ENCODE measurements at regions of chr6 and their contacts with region 1.

Region 1: DNA sequence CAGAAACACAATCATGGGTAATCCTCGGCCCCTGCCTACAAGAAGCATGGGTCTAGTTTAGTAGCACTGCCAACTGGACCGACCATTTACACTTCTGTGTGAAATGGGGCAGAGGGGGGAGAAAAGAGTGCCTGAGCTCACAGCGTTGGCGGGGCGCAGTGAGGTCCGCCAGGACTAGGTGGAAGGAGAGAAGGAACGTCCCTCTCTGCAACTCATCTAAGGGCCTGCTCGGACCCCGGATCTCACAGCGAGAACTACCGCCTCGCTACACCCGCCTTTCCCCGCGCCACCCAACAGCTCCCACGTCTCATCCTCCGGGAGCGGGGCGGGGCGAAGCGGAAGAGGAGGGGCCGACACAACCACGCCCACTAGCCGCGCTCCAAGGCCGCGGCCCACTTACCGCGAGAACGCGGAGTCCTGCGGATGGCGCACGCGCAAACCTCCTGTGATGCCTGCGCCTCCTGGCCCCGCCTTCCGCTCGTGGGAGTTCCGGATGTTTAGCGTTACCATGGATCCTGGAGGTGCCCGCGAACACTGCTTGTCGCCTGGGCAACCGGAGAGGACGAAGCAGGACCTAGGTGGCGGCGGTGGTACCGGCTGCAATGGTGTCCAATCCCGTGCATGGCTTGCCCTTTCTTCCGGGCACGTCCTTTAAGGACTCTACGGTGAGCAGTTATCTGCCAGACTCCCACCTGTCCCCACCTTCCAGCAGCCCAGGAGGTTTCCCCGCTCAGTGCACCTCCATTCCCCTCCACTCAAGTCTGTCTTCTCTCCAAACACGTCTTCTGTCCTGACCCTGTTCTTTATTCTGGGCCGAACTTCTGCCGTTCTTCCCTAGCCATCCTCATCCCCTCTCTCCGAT is at the start of gene EFHC1:
- DNase-seq: peak; percentile 98 to 100 (median 99)
- H3K4me3 ChIP-seq: peak within 1 kb of the TSS; percentile 68
- H3K27ac ChIP-seq: peak within 1 kb of the TSS; percentile 40 to 72
- H3K4me1 ChIP-seq: peaks cover 5% of the 10 kb centered on the region
- H3K27me3 ChIP-seq: no peaks in the 10 kb centered on the region
- CTCF ChIP-seq: no peak
- EP300 ChIP-seq: no peak
- POLR2A ChIP-seq: peak; percentile 79
- total RNA-seq, gene EFHC1: 17.6 to 59.5 (median 23.5) TPM

Region 2: GRCh38 chr6:52304983-52305390 is 115.1 kb before region 1 on chr6:
- intact Hi-C with region 1: no loop called
- DNase-seq: no peak
- H3K4me3 ChIP-seq: no peak overlapping the region
- H3K27ac ChIP-seq: no peak overlapping the region
- H3K4me1 ChIP-seq: peaks cover 3% of the 10 kb centered on the region
- H3K27me3 ChIP-seq: no peaks in the 10 kb centered on the region
- CTCF ChIP-seq: no peak
- EP300 ChIP-seq: no peak
- POLR2A ChIP-seq: no peak

Region 3: GRCh38 chr6:52503848-52504781 is 84.1 kb after region 1 on chr6:
- intact Hi-C with region 1: loop called in 1 of 4 experiments (anchors 10 kb)
- DNase-seq: peak in 3 of 5 donors; percentile 42 to 59 (median 55)
- H3K4me3 ChIP-seq: no peak overlapping the region
- H3K27ac ChIP-seq: no peak overlapping the region
- H3K4me1 ChIP-seq: peaks cover 4% of the 10 kb centered on the region
- H3K27me3 ChIP-seq: no peaks in the 10 kb centered on the region
- CTCF ChIP-seq: no peak
- EP300 ChIP-seq: no peak
- POLR2A ChIP-seq: no peak

Region 4: DNA sequence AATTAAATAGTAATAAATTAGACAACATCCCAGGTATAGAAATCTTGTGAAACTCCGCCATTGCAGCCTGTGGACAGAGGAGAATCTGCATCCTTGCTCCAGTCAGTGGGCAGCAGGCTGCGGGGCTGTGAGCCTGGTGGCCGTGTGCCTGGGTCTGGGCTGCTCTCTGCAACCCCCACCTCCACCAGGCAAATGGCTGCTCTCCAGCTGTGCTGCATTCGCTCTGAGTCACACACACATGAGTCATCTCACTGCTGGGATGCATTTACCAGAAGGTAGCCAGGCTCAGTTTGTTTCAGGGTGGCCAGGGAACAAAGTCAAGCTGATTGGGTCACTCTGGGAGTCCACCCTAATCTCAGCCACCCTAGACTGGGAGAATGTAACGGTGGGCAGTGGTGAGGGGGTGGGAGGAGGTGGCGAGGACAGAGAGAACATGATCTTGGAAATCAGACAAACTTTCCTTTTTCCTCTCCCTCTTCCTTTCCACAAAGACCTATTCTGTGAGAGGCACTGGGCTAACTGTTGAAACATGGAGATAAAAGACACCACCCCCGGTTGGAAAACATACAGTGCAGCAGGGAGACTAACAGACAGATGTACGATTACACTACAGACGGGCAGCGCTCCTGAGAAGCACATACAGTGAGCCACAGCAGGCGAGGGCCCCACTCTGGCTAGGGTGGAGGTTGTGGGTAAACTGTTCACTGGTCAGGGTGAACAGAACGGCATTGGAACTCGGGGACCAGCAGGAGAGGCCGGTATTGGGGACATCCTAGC is 97.7 kb after region 1 on chr6:
- intact Hi-C with region 1: loop called in 2 of 4 experiments (anchors 5 to 10 kb)
- DNase-seq: peak; percentile 88 to 93 (median 92)
- H3K4me3 ChIP-seq: no peak overlapping the region
- H3K27ac ChIP-seq: peak overlapping the region; percentile 48 to 88
- H3K4me1 ChIP-seq: peaks cover 22% of the 10 kb centered on the region
- H3K27me3 ChIP-seq: no peaks in the 10 kb centered on the region
- CTCF ChIP-seq: no peak
- EP300 ChIP-seq: no peak
- POLR2A ChIP-seq: peak; percentile 45

Region 5: DNA sequence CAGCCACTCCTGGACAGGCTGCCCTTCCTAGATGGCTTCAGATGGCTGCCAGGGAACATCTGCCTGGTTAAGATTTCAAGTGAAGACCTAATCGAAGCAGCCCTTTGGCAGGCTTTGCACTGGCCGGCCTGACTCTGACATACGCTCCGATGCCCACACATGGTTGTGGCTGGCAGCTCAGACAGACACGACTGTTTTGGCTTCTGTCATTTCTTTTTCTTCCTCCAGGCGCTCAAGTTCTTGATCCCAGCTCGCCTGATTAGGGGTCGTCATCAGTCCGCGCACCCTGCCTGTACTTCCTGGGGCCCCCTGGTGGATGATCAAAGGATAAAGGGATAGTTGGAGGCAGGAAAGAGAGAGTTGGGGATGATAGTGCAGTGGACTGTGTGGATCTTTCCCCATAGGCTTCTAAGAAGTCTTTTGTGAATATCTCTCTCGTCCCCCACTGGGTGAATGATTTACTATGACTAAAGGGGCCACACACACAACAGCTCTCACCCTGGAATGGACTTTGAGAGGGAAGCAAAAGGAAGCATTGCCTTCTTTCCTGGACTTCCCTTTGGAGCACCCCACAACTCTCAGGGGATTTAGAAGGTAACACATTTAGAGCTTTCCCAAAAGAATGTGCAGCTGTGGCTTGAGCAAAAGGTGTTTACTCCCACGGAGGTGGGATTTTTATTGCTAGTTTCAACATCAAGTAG is 178.2 kb after region 1 on chr6:
- intact Hi-C with region 1: loop called (anchors 2 to 5 kb)
- DNase-seq: peak; percentile 63 to 74 (median 66)
- H3K4me3 ChIP-seq: peak overlapping the region; percentile 5
- H3K27ac ChIP-seq: no peak overlapping the region
- H3K4me1 ChIP-seq: peaks cover 7% of the 10 kb centered on the region
- H3K27me3 ChIP-seq: no peaks in the 10 kb centered on the region
- CTCF ChIP-seq: peak; percentile 63 to 74 (median 66)
- EP300 ChIP-seq: no peak
- POLR2A ChIP-seq: no peak

Measured in ovary (tissue), 10 donors.